Gastrocnemius medialis (tissue), 4 donors: ENCODE measurements at regions of chrX and their contacts with region 1.

Region 1: GRCh38 chrX:72306851-72307645 is 1.3 kb upstream of the CITED1 start:
- DNase-seq: no peak
- ATAC-seq: peak; percentile 71 to 77
- H3K4me3 ChIP-seq: peak overlapping the region; percentile 58 to 69 (median 64)
- H3K27ac ChIP-seq: no peak overlapping the region
- H3K4me1 ChIP-seq: peaks cover 0 to 11% of the 10 kb centered on the region in 2 donors
- H3K27me3 ChIP-seq: peaks cover 2 to 70% (median 62%) of the 10 kb centered on the region in 3 donors
- CTCF ChIP-seq: no peak
- POLR2A ChIP-seq: no peak

Region 2: GRCh38 chrX:72461766-72462165 is 154.7 kb after region 1 on chrX:
- in situ Hi-C with region 1: no loop called
- intact Hi-C with region 1: loop called (anchors 10 kb)
- DNase-seq: no peak
- ATAC-seq: no peak
- H3K4me3 ChIP-seq: no peak overlapping the region
- H3K27ac ChIP-seq: no peak overlapping the region
- H3K4me1 ChIP-seq: peaks cover 0 to 2% of the 10 kb centered on the region in 2 donors
- H3K27me3 ChIP-seq: no peaks in the 10 kb centered on the region
- CTCF ChIP-seq: no peak
- POLR2A ChIP-seq: no peak